ENCODE measurements at regions of chr1 and their contacts with region 1.

Region 1: DNA sequence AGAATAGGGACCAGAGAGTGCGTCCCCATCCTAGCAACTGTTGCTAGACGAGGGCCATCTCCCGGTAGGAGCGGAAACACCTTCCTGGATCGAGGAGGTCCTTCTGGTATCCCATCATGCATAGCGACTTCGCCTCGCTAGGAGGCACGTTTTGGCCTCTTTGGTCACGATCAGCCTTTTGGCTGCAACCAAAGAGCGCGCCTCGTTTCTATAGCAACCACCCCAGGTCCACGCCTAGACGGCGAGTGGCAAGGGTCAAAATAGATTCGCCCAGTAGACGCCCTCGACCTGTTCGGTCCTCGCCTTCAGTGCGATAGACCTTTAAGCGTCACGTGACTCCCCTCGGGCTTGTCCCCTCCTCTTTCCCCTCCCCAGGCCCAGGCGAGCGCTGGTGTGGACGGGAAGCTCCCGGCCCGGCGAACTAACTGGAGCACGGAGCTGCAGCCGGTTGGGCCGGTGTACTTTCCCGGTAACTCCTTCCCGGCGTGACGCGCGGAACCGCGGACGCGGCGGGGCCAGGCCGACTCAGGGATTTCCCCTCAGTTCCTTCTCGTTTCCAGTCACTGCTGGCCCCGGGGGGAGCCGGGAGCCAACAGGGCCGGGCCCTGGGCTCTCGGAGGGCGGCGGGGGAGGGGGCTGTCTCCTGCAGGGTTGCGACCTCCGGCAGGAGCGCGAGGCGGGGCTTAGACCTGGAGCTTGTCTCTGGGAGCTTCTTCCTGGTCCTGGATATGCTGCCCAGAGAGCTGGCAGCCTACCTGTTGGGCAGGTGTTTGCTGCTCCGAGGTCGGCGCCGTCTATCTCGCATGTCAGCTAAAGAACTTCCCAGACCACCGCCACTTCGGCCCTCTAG is at the start of gene DNAJC16:
- DNase-seq: peak; percentile 98
- H3K4me3 Mint-ChIP-seq: peak within 1 kb of the TSS; percentile 83
- H3K27ac Mint-ChIP-seq: peak within 1 kb of the TSS; percentile 95
- H3K4me1 Mint-ChIP-seq: peaks cover 57% of the 10 kb centered on the region
- H3K27me3 Mint-ChIP-seq: no peaks in the 10 kb centered on the region
- total RNA-seq, gene DNAJC16: 18.8 and 19.8 TPM in 2 replicates

Region 2: GRCh38 chr1:15178571-15179484 is 347.9 kb before region 1 on chr1:
- intact Hi-C with region 1: no loop called
- DNase-seq: no peak
- H3K4me3 Mint-ChIP-seq: no peak overlapping the region
- H3K27ac Mint-ChIP-seq: no peak overlapping the region
- H3K4me1 Mint-ChIP-seq: peaks cover 9% of the 10 kb centered on the region
- H3K27me3 Mint-ChIP-seq: peaks cover 16% of the 10 kb centered on the region

Region 3: GRCh38 chr1:15304701-15305467 is 221.8 kb before region 1 on chr1:
- intact Hi-C with region 1: no loop called
- DNase-seq: peak; percentile 36
- H3K4me3 Mint-ChIP-seq: no peak overlapping the region
- H3K27ac Mint-ChIP-seq: no peak overlapping the region
- H3K4me1 Mint-ChIP-seq: no peaks in the 10 kb centered on the region
- H3K27me3 Mint-ChIP-seq: no peaks in the 10 kb centered on the region

Region 4: GRCh38 chr1:15578921-15579682 is 52.4 kb after region 1 on chr1:
- intact Hi-C with region 1: loop called (anchors 1 kb)
- DNase-seq: peak; percentile 37
- H3K4me3 Mint-ChIP-seq: peak overlapping the region; percentile 75
- H3K27ac Mint-ChIP-seq: peak overlapping the region; percentile 90
- H3K4me1 Mint-ChIP-seq: peaks cover 48% of the 10 kb centered on the region
- H3K27me3 Mint-ChIP-seq: no peaks in the 10 kb centered on the region

Region 5: GRCh38 chr1:15617175-15617880 is 90.6 kb after region 1 on chr1 and contains the start of gene DDI2:
- intact Hi-C with region 1: loop called (anchors 1 kb)
- DNase-seq: peak; percentile 94
- H3K4me3 Mint-ChIP-seq: peak within 1 kb of the TSS; percentile 96
- H3K27ac Mint-ChIP-seq: peak within 1 kb of the TSS; percentile 93
- H3K4me1 Mint-ChIP-seq: peaks cover 43% of the 10 kb centered on the region
- H3K27me3 Mint-ChIP-seq: no peaks in the 10 kb centered on the region
- total RNA-seq, gene DDI2: 49.9 and 51.4 TPM in 2 replicates

Region 6: GRCh38 chr1:15966081-15966955 is 439.6 kb after region 1 on chr1:
- intact Hi-C with region 1: loop called (anchors 5 kb)
- DNase-seq: peak; percentile 72
- H3K4me3 Mint-ChIP-seq: peak overlapping the region; percentile 79
- H3K27ac Mint-ChIP-seq: peak overlapping the region; percentile 95
- H3K4me1 Mint-ChIP-seq: peaks cover 77% of the 10 kb centered on the region
- H3K27me3 Mint-ChIP-seq: no peaks in the 10 kb centered on the region

Region 7: DNA sequence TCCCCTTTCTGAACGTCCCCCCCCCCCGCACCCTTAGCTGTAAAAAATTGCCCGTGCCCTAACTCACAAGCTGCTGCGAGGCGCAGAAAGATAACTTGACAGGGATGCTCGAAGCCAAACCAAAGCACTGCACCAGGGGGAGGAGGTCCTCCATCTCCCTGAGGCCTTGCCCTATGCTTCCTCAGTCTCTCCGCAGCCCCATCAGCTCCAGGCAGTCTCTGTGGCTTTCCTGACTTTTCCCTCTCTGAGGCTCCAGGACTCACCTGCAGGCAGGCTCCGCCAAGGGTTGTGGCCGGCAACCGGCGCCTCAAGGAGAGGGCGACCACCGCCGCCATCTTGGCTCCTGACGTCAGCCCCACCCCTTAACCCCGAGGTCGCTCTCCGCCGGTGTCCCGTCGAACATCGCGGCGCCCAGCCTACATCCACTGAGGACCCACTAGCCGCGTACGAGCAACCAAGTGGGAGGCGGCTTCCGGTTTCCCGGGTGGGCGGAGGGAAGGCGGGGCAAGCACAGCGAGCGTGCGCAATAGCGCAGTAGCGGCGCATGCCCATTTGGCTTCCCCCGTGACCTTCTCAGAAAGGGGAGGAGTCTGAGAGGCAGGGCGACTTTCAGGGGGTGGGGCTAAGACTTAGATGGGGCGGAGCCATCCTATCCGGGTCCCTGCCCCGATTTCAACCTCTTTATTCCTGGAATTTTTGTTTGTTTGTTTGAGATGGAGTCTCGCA is 1527.1 kb after region 1 on chr1 and contains the start of gene SDHB:
- intact Hi-C with region 1: loop called (anchors 5 kb)
- DNase-seq: peak; percentile 99
- H3K4me3 Mint-ChIP-seq: peak within 1 kb of the TSS; percentile 99
- H3K27ac Mint-ChIP-seq: peak within 1 kb of the TSS; percentile 95
- H3K4me1 Mint-ChIP-seq: peaks cover 18% of the 10 kb centered on the region
- H3K27me3 Mint-ChIP-seq: peaks cover 2% of the 10 kb centered on the region
- total RNA-seq, gene SDHB: 131 and 137 TPM in 2 replicates